ENCODE measurements at regions of chr12 and their contacts with region 1.

Region 1: DNA sequence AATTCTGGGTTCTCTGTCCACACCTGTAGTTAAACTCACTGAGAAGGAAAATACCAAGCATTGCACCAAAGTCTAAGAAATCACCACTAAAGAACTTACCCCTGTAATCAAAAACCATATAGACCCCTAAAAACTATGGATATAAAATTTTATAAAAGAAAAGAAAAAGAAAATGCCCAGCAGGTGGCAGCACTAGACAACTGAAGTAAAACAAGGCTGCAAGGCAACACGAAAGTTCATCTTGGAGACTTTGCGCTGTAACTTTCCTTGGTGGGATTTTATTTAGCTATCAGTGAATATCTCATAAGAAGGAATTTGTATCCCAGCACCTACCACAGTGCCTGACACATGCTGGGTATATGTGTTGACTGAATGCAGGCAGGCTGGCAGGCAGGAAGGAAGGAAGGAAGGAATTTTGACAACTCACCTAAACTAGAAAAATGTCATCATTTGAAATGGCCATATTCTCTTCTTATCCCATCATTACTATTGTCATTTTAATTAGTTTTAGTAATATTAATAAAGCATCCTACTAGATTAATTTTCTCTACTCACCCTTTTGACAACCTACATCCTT is 68.2 kb upstream of the ETV6 start:
- DNase-seq: no peak
- ATAC-seq: no peak
- H3K4me3 ChIP-seq: no peak overlapping the region
- H3K27ac ChIP-seq: peak overlapping the region; percentile 48; the same call in 1 of the 2 replicates
- H3K4me1 ChIP-seq: peaks cover 38% of the 10 kb centered on the region
- H3K27me3 ChIP-seq: no peaks in the 10 kb centered on the region
- CTCF ChIP-seq: peak; percentile 34 to 58 (median 37); a peak in 3 of 6 replicates
- EP300 ChIP-seq: no peak
- POLR2A ChIP-seq: no peak
- RAD21 ChIP-seq: peak; percentile 91

Region 2: GRCh38 chr12:11347810-11348209 is 233.5 kb before region 1 on chr12:
- CTCF ChIA-PET with region 1: no interaction called
- POLR2A ChIA-PET with region 1: no interaction called
- RAD21 ChIA-PET with region 1: no interaction called
- SMC1A ChIA-PET with region 1: no interaction called
- in situ Hi-C with region 1: no loop called
- intact Hi-C with region 1: no loop called
- DNase-seq: no peak
- ATAC-seq: peak; percentile 81
- H3K4me3 ChIP-seq: no peak overlapping the region
- H3K27ac ChIP-seq: no peak overlapping the region
- H3K4me1 ChIP-seq: no peaks in the 10 kb centered on the region
- H3K27me3 ChIP-seq: no peaks in the 10 kb centered on the region
- CTCF ChIP-seq: peak in 2 of 3 experiments; percentile 15 to 27; a peak in 1 of 6 replicates
- EP300 ChIP-seq: no peak
- POLR2A ChIP-seq: no peak
- RAD21 ChIP-seq: no peak

Region 3: GRCh38 chr12:11568762-11569478 is 12.3 kb before region 1 on chr12:
- CTCF ChIA-PET with region 1: interaction called, 63 read pairs
- POLR2A ChIA-PET with region 1: interaction called, 63 read pairs
- RAD21 ChIA-PET with region 1: interaction called, 322 read pairs
- SMC1A ChIA-PET with region 1: interaction called, 146 read pairs
- in situ Hi-C with region 1: no loop called
- intact Hi-C with region 1: loop called (anchors 1 kb)
- DNase-seq: peak; percentile 96
- ATAC-seq: peak; percentile 77
- H3K4me3 ChIP-seq: peak overlapping the region; percentile 48
- H3K27ac ChIP-seq: peak overlapping the region; percentile 98
- H3K4me1 ChIP-seq: peaks cover 46% of the 10 kb centered on the region
- H3K27me3 ChIP-seq: no peaks in the 10 kb centered on the region
- CTCF ChIP-seq: no peak
- EP300 ChIP-seq: peak; percentile 99
- POLR2A ChIP-seq: no peak
- RAD21 ChIP-seq: no peak

Region 4: GRCh38 chr12:11730299-11731041 is 149.2 kb after region 1 on chr12:
- CTCF ChIA-PET with region 1: interaction called, 4 read pairs
- POLR2A ChIA-PET with region 1: interaction called, 3 read pairs
- RAD21 ChIA-PET with region 1: interaction called, 16 read pairs
- SMC1A ChIA-PET with region 1: interaction called, 25 read pairs
- in situ Hi-C with region 1: no loop called
- intact Hi-C with region 1: loop called (anchors 2 kb)
- DNase-seq: peak; percentile 85
- ATAC-seq: peak; percentile 49
- H3K4me3 ChIP-seq: peak overlapping the region; percentile 18; the same call in 1 of the 2 replicates
- H3K27ac ChIP-seq: peak overlapping the region; percentile 89
- H3K4me1 ChIP-seq: peaks cover 93% of the 10 kb centered on the region
- H3K27me3 ChIP-seq: no peaks in the 10 kb centered on the region
- CTCF ChIP-seq: no peak
- EP300 ChIP-seq: peak in 1 of 2 experiments; percentile 52; a peak in 2 of 4 replicates
- POLR2A ChIP-seq: peak; percentile 62; the same call in 1 of the 2 replicates
- RAD21 ChIP-seq: peak; percentile 34

Region 5: GRCh38 chr12:11780521-11781101 is 199.3 kb after region 1 on chr12:
- CTCF ChIA-PET with region 1: interaction called, 3 read pairs
- POLR2A ChIA-PET with region 1: no interaction called
- RAD21 ChIA-PET with region 1: interaction called, 5 read pairs
- SMC1A ChIA-PET with region 1: interaction called, 10 read pairs
- in situ Hi-C with region 1: no loop called
- intact Hi-C with region 1: no loop called
- DNase-seq: peak; percentile 94
- ATAC-seq: peak; percentile 79
- H3K4me3 ChIP-seq: peak overlapping the region; percentile 13; the same call in 1 of the 2 replicates
- H3K27ac ChIP-seq: peak overlapping the region; percentile 95
- H3K4me1 ChIP-seq: peaks cover 67% of the 10 kb centered on the region
- H3K27me3 ChIP-seq: no peaks in the 10 kb centered on the region
- CTCF ChIP-seq: no peak
- EP300 ChIP-seq: peak; percentile 67 to 91; a peak in 2 of 4 replicates
- POLR2A ChIP-seq: peak; percentile 48; the same call in 1 of the 2 replicates
- RAD21 ChIP-seq: 0 out of 2 replicates have a peak, but pooled peaks have one; percentile 3

Region 6: DNA sequence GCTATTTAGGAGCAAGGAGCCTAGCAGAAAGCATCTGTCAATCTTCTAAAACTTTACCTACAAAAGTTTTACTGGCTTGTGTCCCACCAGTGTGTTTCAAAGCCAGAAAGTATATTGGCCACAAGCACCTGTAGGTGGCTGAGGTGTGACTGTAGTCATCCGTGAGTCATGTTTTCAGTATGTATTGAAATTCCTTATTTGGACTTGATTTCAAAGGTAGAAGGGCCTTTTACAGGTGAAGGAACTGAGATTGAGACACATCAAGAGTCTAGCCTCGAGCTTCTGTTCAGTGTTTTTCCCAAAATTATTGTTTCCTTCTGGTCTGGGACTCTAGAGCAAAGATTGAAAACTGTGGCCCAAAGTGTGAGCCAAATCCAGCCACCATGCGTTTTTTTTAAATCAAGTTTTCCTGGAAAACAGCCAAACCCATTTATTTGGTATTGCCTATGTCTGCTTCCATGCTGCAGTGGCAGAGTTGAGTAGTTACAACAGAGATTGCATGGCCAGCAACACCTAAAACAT is 294.2 kb after region 1 on chr12:
- CTCF ChIA-PET with region 1: no interaction called
- POLR2A ChIA-PET with region 1: no interaction called
- RAD21 ChIA-PET with region 1: no interaction called
- SMC1A ChIA-PET with region 1: no interaction called
- in situ Hi-C with region 1: no loop called
- intact Hi-C with region 1: no loop called
- DNase-seq: no peak
- ATAC-seq: peak; percentile 78
- H3K4me3 ChIP-seq: no peak overlapping the region
- H3K27ac ChIP-seq: peak overlapping the region; percentile 49; the same call in 1 of the 2 replicates
- H3K4me1 ChIP-seq: peaks cover 14% of the 10 kb centered on the region
- H3K27me3 ChIP-seq: no peaks in the 10 kb centered on the region
- CTCF ChIP-seq: no peak
- EP300 ChIP-seq: no peak
- POLR2A ChIP-seq: no peak
- RAD21 ChIP-seq: no peak

Region 7: DNA sequence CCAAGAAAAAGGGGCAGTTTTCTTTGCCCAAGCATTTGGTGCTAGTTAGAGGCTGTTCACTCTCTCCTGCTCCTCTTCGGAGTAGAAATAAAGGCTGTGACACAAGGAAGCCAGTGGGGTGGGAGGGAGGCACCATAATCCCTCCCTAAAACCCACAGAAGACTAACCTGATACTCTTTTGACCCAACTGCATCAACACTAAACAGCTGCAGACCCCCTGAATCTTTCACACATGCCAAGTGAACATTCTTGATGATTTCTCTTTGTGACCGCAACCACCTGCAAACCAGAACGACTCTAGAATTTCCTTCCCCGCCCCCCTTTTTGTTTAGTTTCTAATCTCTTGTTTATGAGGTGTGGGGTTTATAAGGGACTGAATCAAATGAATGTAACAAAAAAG is 313.6 kb after region 1 on chr12:
- CTCF ChIA-PET with region 1: no interaction called
- POLR2A ChIA-PET with region 1: interaction called, 4 read pairs
- RAD21 ChIA-PET with region 1: interaction called, 3 read pairs
- SMC1A ChIA-PET with region 1: interaction called, 3 read pairs
- in situ Hi-C with region 1: no loop called
- intact Hi-C with region 1: loop called (anchors 5 kb)
- DNase-seq: peak; percentile 31
- ATAC-seq: no peak
- H3K4me3 ChIP-seq: no peak overlapping the region
- H3K27ac ChIP-seq: peak overlapping the region; percentile 74
- H3K4me1 ChIP-seq: peaks cover 28% of the 10 kb centered on the region
- H3K27me3 ChIP-seq: no peaks in the 10 kb centered on the region
- CTCF ChIP-seq: no peak
- EP300 ChIP-seq: no peak
- POLR2A ChIP-seq: no peak
- RAD21 ChIP-seq: 0 out of 2 replicates have a peak, but pooled peaks have one; percentile 7

Region 8: DNA sequence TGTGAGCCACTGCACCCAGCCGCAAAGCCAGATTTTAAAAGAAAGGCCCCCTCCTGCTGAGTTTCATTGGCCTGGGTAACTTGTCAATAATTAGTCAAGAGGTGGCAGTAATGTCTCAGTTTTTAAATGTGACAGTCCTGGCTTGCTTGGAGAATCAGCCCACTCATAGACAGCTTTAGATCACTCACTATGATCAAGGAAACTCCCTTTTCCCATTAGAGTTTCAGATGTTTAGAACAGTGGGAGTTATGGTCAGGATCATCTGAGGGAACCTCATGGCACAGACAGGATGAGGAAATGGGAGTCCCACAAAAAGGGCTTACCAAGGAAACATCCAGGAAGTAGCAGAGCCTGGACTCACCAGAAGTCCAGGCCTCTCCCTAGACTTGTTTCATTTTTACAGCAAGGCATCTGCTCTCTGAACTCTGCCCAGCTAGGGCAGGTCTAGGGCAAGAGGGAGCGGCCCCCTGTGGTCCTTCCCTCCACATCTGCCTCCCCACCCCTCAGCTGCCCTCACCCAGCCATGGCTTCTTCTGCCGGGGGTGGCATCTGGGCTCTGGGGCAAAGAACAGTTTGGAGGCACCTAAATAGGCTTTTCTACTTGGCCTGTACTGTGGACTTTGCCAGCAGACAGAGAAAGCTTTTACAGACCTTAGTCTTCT is 500.7 kb after region 1 on chr12:
- CTCF ChIA-PET with region 1: interaction called, 11 read pairs
- POLR2A ChIA-PET with region 1: no interaction called
- RAD21 ChIA-PET with region 1: interaction called, 3 read pairs
- SMC1A ChIA-PET with region 1: interaction called, 11 read pairs
- in situ Hi-C with region 1: no loop called
- intact Hi-C with region 1: no loop called
- DNase-seq: peak; percentile 39
- ATAC-seq: peak; percentile 96
- H3K4me3 ChIP-seq: no peak overlapping the region
- H3K27ac ChIP-seq: no peak overlapping the region
- H3K4me1 ChIP-seq: no peaks in the 10 kb centered on the region
- H3K27me3 ChIP-seq: no peaks in the 10 kb centered on the region
- CTCF ChIP-seq: peak; percentile 33 to 54 (median 34); a peak in 4 of 6 replicates
- EP300 ChIP-seq: no peak
- POLR2A ChIP-seq: no peak
- RAD21 ChIP-seq: peak; percentile 80

Region 9: DNA sequence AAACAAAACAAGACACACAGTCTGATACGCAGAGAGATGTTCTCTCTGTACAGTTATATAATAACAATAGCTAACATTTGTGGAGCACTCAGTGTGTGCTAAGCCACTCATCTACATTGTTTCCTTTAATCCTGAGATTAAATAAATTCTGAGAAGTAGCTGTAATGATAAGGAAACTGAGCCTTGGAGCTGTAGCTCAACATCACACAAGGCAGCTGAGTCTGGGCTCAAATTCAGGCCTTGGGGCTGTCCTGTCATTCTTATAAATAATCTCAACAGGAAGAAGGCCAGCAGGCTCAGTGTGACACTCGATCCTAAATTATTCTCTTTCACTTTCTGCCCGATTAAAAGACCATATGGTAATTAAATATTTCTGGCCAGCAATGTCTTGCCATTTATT is 1160.4 kb after region 1 on chr12:
- CTCF ChIA-PET with region 1: no interaction called
- POLR2A ChIA-PET with region 1: no interaction called
- RAD21 ChIA-PET with region 1: no interaction called
- SMC1A ChIA-PET with region 1: no interaction called
- in situ Hi-C with region 1: no loop called
- intact Hi-C with region 1: no loop called
- DNase-seq: no peak
- ATAC-seq: no peak
- H3K4me3 ChIP-seq: no peak overlapping the region
- H3K27ac ChIP-seq: no peak overlapping the region
- H3K4me1 ChIP-seq: peaks cover 2% of the 10 kb centered on the region
- H3K27me3 ChIP-seq: no peaks in the 10 kb centered on the region
- CTCF ChIP-seq: no peak
- EP300 ChIP-seq: no peak
- POLR2A ChIP-seq: no peak
- RAD21 ChIP-seq: no peak

Measured in GM12878 (cell line).